ENCODE measurements at regions of chr1 and their contacts with region 1.

Region 1: DNA sequence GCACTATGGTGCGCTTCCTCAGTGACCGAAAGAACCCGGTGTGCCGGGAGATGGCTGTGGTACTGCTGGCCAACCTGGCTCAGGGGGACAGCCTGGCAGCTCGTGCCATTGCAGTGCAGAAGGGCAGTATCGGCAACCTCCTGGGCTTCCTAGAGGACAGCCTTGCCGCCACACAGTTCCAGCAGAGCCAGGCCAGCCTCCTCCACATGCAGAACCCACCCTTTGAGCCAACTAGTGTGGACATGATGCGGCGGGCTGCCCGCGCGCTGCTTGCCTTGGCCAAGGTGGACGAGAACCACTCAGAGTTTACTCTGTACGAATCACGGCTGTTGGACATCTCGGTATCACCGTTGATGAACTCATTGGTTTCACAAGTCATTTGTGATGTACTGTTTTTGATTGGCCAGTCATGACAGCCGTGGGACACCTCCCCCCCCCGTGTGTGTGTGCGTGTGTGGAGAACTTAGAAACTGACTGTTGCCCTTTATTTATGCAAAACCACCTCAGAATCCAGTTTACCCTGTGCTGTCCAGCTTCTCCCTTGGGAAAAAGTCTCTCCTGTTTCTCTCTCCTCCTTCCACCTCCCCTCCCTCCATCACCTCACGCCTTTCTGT is 7.3 kb upstream of the PIGV start:
- DNase-seq: no peak
- H3K4me3 ChIP-seq: no peak overlapping the region
- H3K27ac ChIP-seq: no peak overlapping the region
- H3K4me1 ChIP-seq: peaks cover 1 to 42% (median 27%) of the 10 kb centered on the region in 4 donors
- H3K27me3 ChIP-seq: no peaks in the 10 kb centered on the region
- CTCF ChIP-seq: no peak
- EP300 ChIP-seq: no peak
- POLR2A ChIP-seq: no peak

Region 2: GRCh38 chr1:26754086-26754874 is 26.2 kb before region 1 on chr1:
- in situ Hi-C with region 1: no loop called
- intact Hi-C with region 1: loop called (anchors 1 kb)
- DNase-seq: no peak
- H3K4me3 ChIP-seq: no peak overlapping the region
- H3K27ac ChIP-seq: no peak overlapping the region
- H3K4me1 ChIP-seq: peaks cover 0 to 25% (median 9%) of the 10 kb centered on the region in 4 donors
- H3K27me3 ChIP-seq: no peaks in the 10 kb centered on the region
- CTCF ChIP-seq: no peak
- EP300 ChIP-seq: no peak
- POLR2A ChIP-seq: no peak

Region 3: DNA sequence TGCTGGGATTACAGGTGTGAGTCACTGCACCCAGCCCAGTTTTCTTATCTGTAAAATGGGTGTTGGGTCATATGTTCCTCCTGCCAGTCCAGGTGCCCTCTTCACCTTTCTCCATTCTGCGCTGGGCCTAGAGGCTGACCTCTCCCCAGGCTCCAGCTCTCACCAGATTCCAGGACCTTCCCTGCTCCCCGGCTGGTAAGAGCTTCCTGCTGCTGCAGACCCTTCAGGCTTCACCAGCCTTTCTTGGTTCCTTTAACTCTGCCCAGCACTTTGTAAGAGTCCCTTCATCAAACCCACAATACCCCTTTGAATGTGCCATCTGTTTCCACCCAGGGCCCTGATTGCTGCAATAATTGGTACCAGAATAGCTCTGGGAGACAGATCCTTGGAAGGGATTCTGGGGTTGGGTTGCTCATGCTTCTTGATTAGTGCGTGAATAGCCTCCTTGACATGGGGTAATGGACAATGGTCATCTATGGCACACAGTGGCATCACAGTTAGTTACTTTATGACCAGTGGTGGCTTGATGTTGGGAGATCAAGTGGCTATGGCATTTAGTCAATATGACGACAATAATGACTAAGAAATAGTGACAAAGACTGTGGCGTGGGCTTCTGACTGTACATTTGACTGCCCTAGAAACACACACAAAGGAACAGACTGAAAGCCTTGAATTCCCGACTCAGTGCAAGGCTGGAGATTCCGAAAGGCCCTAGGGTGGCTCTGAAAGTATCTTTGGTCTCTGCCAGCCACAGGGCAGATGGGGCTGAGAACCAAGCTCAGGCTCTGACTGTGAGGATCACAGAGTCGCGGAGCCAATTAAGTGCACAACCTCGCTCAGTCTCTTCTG is 307.1 kb after region 1 on chr1:
- in situ Hi-C with region 1: no loop called
- intact Hi-C with region 1: no loop called
- DNase-seq: no peak
- H3K4me3 ChIP-seq: no peak overlapping the region
- H3K27ac ChIP-seq: no peak overlapping the region
- H3K4me1 ChIP-seq: no peaks in the 10 kb centered on the region
- H3K27me3 ChIP-seq: no peaks in the 10 kb centered on the region
- CTCF ChIP-seq: no peak
- EP300 ChIP-seq: no peak
- POLR2A ChIP-seq: no peak

Region 4: GRCh38 chr1:27257155-27257554 is 476.7 kb after region 1 on chr1:
- in situ Hi-C with region 1: no loop called
- intact Hi-C with region 1: no loop called
- DNase-seq: no peak
- H3K4me3 ChIP-seq: no peak overlapping the region
- H3K27ac ChIP-seq: no peak overlapping the region
- H3K4me1 ChIP-seq: peaks cover 0 to 4% (median 0%) of the 10 kb centered on the region in 4 donors
- H3K27me3 ChIP-seq: no peaks in the 10 kb centered on the region
- CTCF ChIP-seq: no peak
- EP300 ChIP-seq: no peak
- POLR2A ChIP-seq: no peak

Measured in transverse colon (tissue), 4 donors.